Mammary epithelial cell (primary cell): ENCODE measurements at regions of chr6 and their contacts with region 1.

Region 1: GRCh38 chr6:170143401-170144150 is 147.3 kb downstream of the DLL1 start:
- DNase-seq: no peak
- H3K4me3 ChIP-seq: no peak overlapping the region
- H3K27ac ChIP-seq: no peak overlapping the region
- H3K4me1 ChIP-seq: peaks cover 20% of the 10 kb centered on the region
- H3K27me3 ChIP-seq: no peaks in the 10 kb centered on the region
- CTCF ChIP-seq: no peak

Region 2: GRCh38 chr6:169766232-169766631 is 377.3 kb before region 1 on chr6:
- CTCF ChIA-PET with region 1: no interaction called
- dilution Hi-C with region 1: no loop called
- in situ Hi-C with region 1: no loop called
- intact Hi-C with region 1: no loop called
- DNase-seq: no peak
- H3K4me3 ChIP-seq: no peak overlapping the region
- H3K27ac ChIP-seq: no peak overlapping the region
- H3K4me1 ChIP-seq: no peaks in the 10 kb centered on the region
- H3K27me3 ChIP-seq: no peaks in the 10 kb centered on the region
- CTCF ChIP-seq: no peak

Region 3: GRCh38 chr6:170039156-170040107 is 104.1 kb before region 1 on chr6:
- CTCF ChIA-PET with region 1: no interaction called
- dilution Hi-C with region 1: loop called (anchors 5 kb)
- in situ Hi-C with region 1: no loop called
- intact Hi-C with region 1: no loop called
- DNase-seq: no peak
- H3K4me3 ChIP-seq: no peak overlapping the region
- H3K27ac ChIP-seq: no peak overlapping the region
- H3K4me1 ChIP-seq: peaks cover 13% of the 10 kb centered on the region
- H3K27me3 ChIP-seq: no peaks in the 10 kb centered on the region
- CTCF ChIP-seq: no peak

Region 4: GRCh38 chr6:170087941-170088581 is 55.5 kb before region 1 on chr6:
- CTCF ChIA-PET with region 1: no interaction called
- dilution Hi-C with region 1: no loop called
- in situ Hi-C with region 1: no loop called
- intact Hi-C with region 1: no loop called
- DNase-seq: no peak
- H3K4me3 ChIP-seq: no peak overlapping the region
- H3K27ac ChIP-seq: no peak overlapping the region
- H3K4me1 ChIP-seq: no peaks in the 10 kb centered on the region
- H3K27me3 ChIP-seq: no peaks in the 10 kb centered on the region
- CTCF ChIP-seq: no peak

Region 5: DNA sequence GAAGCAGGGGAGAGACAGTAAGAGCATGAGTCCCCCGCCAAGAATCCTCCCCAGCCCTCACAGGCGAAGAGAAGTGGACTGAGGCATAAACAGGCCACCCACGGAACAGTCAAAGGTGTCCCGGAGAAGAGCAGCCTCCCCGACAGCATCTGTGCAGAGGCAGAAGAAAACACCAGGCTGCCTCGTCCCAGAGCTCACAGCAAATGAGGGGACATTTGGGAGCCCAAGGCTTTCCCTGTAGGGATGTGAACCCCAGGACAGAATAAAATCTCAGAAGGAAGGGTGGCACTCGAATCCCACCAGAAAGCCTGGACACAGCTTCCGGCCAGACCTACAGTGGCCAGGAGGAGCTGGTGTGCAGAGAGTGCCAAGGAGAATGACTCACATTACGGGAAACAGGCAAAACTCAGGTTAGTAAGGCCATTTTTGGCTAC is 56.9 kb after region 1 on chr6:
- CTCF ChIA-PET with region 1: no interaction called
- dilution Hi-C with region 1: no loop called
- in situ Hi-C with region 1: no loop called
- intact Hi-C with region 1: no loop called
- DNase-seq: peak; percentile 34
- H3K4me3 ChIP-seq: no peak overlapping the region
- H3K27ac ChIP-seq: no peak overlapping the region
- H3K4me1 ChIP-seq: peaks cover 11% of the 10 kb centered on the region
- H3K27me3 ChIP-seq: no peaks in the 10 kb centered on the region
- CTCF ChIP-seq: no peak